ENCODE measurements at regions of chr5 and their contacts with region 1.

Region 1: DNA sequence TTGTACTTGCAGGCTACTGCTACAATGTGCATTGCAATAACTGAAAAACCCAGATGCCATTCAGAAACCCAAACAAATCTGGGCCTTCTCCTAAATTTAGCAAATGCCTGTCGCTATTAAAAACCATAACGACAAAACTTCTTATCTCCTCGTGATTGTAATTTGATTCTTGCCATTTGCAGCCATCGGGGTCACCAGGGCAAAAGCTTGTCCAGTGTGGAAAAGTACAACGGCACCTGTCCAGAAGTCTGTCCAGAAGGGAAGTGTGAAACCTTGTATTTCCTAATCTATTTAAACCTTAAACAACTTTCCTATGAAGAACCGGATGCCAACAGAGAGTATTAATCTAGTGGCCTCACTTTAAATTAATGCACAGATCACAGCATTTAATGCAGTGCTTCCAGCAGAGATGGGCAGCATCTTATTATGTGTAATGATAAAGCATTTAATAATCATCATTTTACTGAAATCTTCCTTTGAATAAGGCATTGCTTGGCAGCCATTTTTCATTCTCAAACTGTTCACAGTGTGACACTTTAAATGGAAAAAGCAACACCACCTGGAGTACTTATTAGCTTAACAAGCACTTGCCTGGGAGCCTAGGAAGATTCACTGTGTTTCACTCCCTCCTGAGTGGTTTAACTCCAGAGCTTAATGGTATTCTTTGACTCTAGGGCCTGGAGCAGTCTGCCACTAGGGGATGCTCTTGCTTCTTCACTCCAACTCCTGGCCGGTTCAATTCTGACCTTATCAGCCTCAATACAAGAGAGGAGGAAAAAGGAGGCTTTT is 4.9 kb upstream of the C7 start:
- DNase-seq: peak; percentile 65
- H3K4me3 ChIP-seq: no peak overlapping the region
- H3K27ac ChIP-seq: no peak overlapping the region
- H3K27me3 ChIP-seq: no peaks in the 10 kb centered on the region
- CTCF ChIP-seq: peak; percentile 100

Region 2: DNA sequence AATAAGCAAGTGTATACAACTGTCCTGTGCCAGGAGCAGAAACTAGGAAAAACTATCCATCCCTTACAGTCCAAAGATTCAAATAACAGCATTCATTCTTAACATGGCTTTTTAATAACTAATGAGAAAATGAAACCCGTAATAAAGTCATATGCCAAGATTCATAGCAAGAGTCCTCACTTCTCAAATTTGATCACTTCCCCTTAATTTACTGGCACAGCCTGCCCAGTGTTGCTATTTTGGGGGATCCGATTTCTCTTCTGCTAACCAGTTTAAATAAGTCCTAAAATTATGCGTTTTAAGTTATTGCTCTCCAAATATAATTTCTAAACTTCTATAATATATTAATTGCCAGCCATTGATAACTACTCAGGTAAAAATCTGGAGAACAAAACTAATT is 401.7 kb before region 1 on chr5:
- CTCF ChIA-PET with region 1: no interaction called
- POLR2A ChIA-PET with region 1: no interaction called
- DNase-seq: no peak
- H3K4me3 ChIP-seq: no peak overlapping the region
- H3K27ac ChIP-seq: no peak overlapping the region
- H3K27me3 ChIP-seq: no peaks in the 10 kb centered on the region
- CTCF ChIP-seq: no peak

Region 3: GRCh38 chr5:40770764-40771163 is 133.6 kb before region 1 on chr5:
- CTCF ChIA-PET with region 1: no interaction called
- POLR2A ChIA-PET with region 1: no interaction called
- DNase-seq: no peak
- H3K4me3 ChIP-seq: no peak overlapping the region
- H3K27ac ChIP-seq: no peak overlapping the region
- H3K27me3 ChIP-seq: no peaks in the 10 kb centered on the region
- CTCF ChIP-seq: no peak

Region 4: GRCh38 chr5:40869384-40869783 is 35.0 kb before region 1 on chr5:
- CTCF ChIA-PET with region 1: no interaction called
- POLR2A ChIA-PET with region 1: no interaction called
- DNase-seq: no peak
- H3K4me3 ChIP-seq: no peak overlapping the region
- H3K27ac ChIP-seq: no peak overlapping the region
- H3K27me3 ChIP-seq: peaks cover 2% of the 10 kb centered on the region
- CTCF ChIP-seq: no peak

Region 5: DNA sequence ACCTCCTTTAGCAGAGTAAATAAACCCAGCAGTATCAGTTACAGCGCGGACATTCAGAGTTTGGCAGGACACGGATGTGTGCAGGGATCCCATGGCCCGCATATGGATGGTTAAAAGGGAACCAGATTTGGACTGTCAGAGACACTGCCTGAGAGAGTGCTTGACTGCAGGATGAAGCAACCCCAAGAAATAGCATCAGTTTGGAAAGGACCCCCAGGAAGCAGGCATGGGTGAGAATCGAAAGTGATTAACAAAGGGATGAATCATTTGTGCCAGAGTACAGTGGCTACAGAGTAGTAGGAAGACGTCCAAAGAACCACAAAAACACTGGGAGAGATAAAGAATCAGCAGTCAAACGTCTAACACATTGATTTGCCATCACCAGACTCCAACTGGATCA is 10.4 kb after region 1 on chr5:
- CTCF ChIA-PET with region 1: interaction called, 21 read pairs
- POLR2A ChIA-PET with region 1: no interaction called
- DNase-seq: no peak
- H3K4me3 ChIP-seq: no peak overlapping the region
- H3K27ac ChIP-seq: no peak overlapping the region
- H3K27me3 ChIP-seq: no peaks in the 10 kb centered on the region
- CTCF ChIP-seq: no peak

Region 6: GRCh38 chr5:41087461-41087860 is 183.1 kb after region 1 on chr5:
- CTCF ChIA-PET with region 1: interaction called, 14 read pairs
- POLR2A ChIA-PET with region 1: no interaction called
- DNase-seq: peak; percentile 60
- H3K4me3 ChIP-seq: no peak overlapping the region
- H3K27ac ChIP-seq: peak overlapping the region; percentile 47
- H3K27me3 ChIP-seq: no peaks in the 10 kb centered on the region
- CTCF ChIP-seq: no peak

Region 7: GRCh38 chr5:41219658-41220269 is 315.4 kb after region 1 on chr5:
- CTCF ChIA-PET with region 1: interaction called, 14 read pairs
- POLR2A ChIA-PET with region 1: no interaction called
- DNase-seq: no peak
- H3K4me3 ChIP-seq: no peak overlapping the region
- H3K27ac ChIP-seq: no peak overlapping the region
- H3K27me3 ChIP-seq: no peaks in the 10 kb centered on the region
- CTCF ChIP-seq: no peak

Region 8: GRCh38 chr5:41275813-41276512 is 371.6 kb after region 1 on chr5:
- CTCF ChIA-PET with region 1: interaction called, 14 read pairs
- POLR2A ChIA-PET with region 1: interaction called, 3 read pairs
- DNase-seq: no peak
- H3K4me3 ChIP-seq: no peak overlapping the region
- H3K27ac ChIP-seq: no peak overlapping the region
- H3K27me3 ChIP-seq: no peaks in the 10 kb centered on the region
- CTCF ChIP-seq: no peak

Region 9: DNA sequence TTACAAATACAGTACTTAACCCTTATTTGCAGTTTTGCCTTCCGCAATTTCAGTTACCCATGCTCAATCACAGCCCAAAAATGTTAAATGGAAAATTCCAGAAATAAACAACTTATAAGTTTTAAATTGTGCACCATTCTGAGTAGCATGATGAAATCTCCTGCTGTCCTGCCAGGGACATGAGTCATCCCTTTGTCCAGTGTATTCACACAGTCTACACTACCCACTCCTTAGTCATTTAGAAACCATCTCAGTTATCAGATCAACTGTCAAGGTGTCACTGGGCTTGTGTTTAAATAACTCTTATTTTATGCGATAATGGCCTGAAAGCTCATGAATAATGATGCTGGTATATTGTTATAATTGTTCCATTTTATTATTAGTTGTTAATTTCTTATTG is 510.2 kb after region 1 on chr5:
- CTCF ChIA-PET with region 1: interaction called, 11 read pairs
- POLR2A ChIA-PET with region 1: no interaction called
- DNase-seq: peak; percentile 70
- H3K4me3 ChIP-seq: no peak overlapping the region
- H3K27ac ChIP-seq: no peak overlapping the region
- H3K27me3 ChIP-seq: no peaks in the 10 kb centered on the region
- CTCF ChIP-seq: no peak

Region 10: GRCh38 chr5:41843456-41844370 is 939.3 kb after region 1 on chr5:
- CTCF ChIA-PET with region 1: interaction called, 26 read pairs
- POLR2A ChIA-PET with region 1: no interaction called
- DNase-seq: peak; percentile 48
- H3K4me3 ChIP-seq: no peak overlapping the region
- H3K27ac ChIP-seq: no peak overlapping the region
- H3K27me3 ChIP-seq: no peaks in the 10 kb centered on the region
- CTCF ChIP-seq: peak; percentile 90